Activated B cell treated with CpG ODN at 0.5 μM for 24 hours (primary cell): ENCODE measurements at regions of chr11 and their contacts with region 1.

Region 1: GRCh38 chr11:67265633-67266423 is 445 bp upstream of the GRK2 start:
- DNase-seq: peak; percentile 90
- ATAC-seq: peak; percentile 62
- H3K4me3 Mint-ChIP-seq: peak overlapping the region; percentile 77
- H3K27ac Mint-ChIP-seq: peak overlapping the region; percentile 84
- H3K4me1 Mint-ChIP-seq: peaks cover 67% of the 10 kb centered on the region
- H3K27me3 Mint-ChIP-seq: peaks cover 2% of the 10 kb centered on the region
- CTCF ChIP-seq: no peak

Region 2: DNA sequence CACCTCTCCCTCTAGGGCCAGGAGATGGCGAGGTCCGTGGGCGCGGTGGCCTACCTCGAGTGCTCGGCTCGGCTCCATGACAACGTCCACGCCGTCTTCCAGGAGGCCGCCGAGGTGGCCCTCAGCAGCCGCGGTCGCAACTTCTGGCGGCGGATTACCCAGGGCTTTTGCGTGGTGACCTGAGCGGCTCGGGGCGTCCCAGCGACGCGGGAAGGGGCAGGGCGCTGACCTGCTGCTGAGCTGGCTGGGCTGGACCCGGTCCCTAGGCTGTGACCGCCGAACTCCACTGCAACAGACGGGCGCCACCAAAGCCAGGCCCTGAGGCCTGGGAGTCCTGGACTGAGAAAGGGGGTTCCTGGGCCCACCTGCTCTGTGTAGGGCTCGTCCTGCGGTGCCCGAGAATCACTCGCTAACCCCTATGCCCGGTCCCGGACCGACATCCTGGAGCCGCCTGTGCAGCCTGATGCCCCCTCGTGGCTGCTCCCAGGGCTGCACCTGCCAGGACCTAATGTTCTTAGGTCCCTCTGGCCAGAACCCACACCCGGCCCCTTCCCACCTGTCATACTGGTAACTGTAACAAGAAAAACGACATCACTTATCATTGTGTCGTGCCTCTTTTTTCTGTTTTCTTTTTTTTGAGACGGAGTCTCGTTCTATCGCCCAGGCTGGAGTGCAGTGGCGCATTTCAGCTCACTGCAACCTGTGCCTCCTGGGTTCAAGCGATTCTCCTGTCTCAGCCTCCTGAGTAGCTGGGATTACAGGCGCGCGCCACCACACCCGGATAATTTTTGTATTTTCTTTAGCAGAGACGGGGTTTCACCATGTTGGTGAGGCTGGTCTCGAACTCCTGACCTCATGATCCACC is 194.2 kb before region 1 on chr11:
- CTCF ChIA-PET with region 1: no interaction called
- POLR2A ChIA-PET with region 1: no interaction called
- intact Hi-C with region 1: no loop called
- DNase-seq: peak; percentile 55
- ATAC-seq: peak; percentile 91
- H3K4me3 Mint-ChIP-seq: peak overlapping the region; percentile 32
- H3K27ac Mint-ChIP-seq: no peak overlapping the region
- H3K4me1 Mint-ChIP-seq: peaks cover 3% of the 10 kb centered on the region
- H3K27me3 Mint-ChIP-seq: peaks cover 13% of the 10 kb centered on the region
- CTCF ChIP-seq: no peak

Region 3: DNA sequence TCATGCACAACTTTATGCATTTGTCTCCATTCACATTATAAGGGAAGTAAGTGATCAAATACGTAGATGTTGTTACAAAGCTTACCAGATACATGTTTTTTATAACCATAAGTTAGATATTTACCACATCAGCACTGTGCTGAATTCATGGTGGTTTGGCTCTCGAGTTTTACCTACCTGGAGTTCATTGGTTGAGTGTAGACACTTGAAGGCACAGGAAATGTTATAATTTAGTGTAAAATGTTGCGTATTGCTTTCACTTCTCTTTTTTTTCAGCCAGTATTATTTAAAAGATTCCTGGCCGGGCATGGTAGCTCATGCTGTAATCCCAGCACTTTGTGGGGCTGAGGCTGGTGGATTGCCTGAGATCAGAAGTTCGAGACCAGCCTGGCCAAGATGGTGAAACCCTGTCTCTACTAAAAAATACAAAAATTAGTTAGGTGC is 52.6 kb before region 1 on chr11:
- CTCF ChIA-PET with region 1: no interaction called
- POLR2A ChIA-PET with region 1: no interaction called
- intact Hi-C with region 1: no loop called
- DNase-seq: no peak
- ATAC-seq: peak; percentile 95
- H3K4me3 Mint-ChIP-seq: peak overlapping the region; percentile 36
- H3K27ac Mint-ChIP-seq: peak overlapping the region; percentile 55
- H3K4me1 Mint-ChIP-seq: peaks cover 20% of the 10 kb centered on the region
- H3K27me3 Mint-ChIP-seq: no peaks in the 10 kb centered on the region
- CTCF ChIP-seq: no peak

Region 4: DNA sequence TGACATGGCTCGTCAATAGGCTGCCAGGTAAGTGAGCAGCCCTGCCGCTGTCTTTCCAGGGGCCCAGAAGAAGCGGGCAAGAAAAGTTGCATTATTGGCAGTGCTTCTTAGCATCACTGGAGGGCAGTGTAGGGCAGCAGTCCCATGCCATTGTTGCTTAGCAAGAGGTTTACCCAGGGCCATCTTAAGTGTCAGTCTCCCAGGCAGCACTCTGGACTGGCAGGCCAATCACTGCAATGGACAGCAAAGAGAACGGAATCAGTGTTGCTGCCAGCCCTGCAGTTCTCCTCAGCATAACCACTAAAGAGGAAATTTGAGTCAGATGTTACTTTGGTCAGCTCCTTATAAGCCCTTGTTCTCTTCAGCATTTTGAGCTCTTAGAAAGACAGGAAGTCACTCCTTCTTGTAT is 13.0 kb before region 1 on chr11:
- CTCF ChIA-PET with region 1: interaction called, 21 read pairs
- POLR2A ChIA-PET with region 1: interaction called, 3 read pairs
- intact Hi-C with region 1: no loop called
- DNase-seq: no peak
- ATAC-seq: peak; percentile 75
- H3K4me3 Mint-ChIP-seq: no peak overlapping the region
- H3K27ac Mint-ChIP-seq: no peak overlapping the region
- H3K4me1 Mint-ChIP-seq: peaks cover 8% of the 10 kb centered on the region
- H3K27me3 Mint-ChIP-seq: no peaks in the 10 kb centered on the region
- CTCF ChIP-seq: no peak

Region 5: GRCh38 chr11:67288452-67289225 is 22.8 kb after region 1 on chr11:
- CTCF ChIA-PET with region 1: interaction called, 20 read pairs
- POLR2A ChIA-PET with region 1: interaction called, 280 read pairs
- intact Hi-C with region 1: loop called (anchors 1 kb)
- DNase-seq: peak; percentile 96
- ATAC-seq: peak; percentile 76
- H3K4me3 Mint-ChIP-seq: peak overlapping the region; percentile 80
- H3K27ac Mint-ChIP-seq: peak overlapping the region; percentile 98
- H3K4me1 Mint-ChIP-seq: peaks cover 46% of the 10 kb centered on the region
- H3K27me3 Mint-ChIP-seq: no peaks in the 10 kb centered on the region
- CTCF ChIP-seq: no peak

Region 6: DNA sequence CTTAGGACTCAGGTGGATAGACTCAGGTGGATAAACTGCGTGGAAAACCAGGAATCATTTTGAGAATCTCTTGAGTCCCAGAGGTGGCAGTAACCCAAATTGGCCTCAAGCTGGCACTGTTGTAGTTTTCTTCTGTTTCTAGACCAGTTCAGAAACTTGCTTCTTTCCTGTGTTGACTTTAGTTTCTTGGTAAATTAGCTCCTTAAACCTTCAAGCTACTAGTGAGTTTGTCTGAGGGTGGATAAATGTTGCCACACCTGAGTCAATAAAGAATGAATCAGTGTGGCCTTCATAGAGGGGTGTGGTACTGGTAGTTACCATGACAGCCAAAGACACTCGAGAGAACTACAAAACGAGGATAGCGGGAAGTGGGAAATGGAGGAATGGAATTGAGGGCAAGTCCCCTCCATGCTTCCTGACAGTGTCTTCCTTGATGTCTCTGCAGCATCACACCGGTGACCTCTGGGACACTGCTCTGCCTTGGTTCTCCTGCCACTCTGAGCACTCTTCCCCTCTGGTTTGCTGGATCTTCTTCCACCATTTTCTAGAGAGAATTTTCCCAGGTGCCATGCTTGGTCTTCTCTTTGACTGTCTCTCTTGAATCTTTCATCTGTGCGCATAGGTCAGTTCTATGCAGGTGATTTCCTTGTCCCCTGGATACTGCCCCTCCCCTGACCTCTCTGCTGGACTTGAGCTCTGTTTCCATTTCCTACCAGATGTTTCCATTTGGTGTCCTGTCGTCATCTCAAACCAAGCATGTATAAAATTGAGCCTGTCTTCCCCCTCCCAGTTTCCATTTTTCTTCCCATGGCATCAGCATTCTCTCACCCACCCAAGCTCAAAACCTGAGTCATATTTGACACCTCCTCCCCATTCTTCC is 80.3 kb after region 1 on chr11:
- CTCF ChIA-PET with region 1: interaction called, 19 read pairs
- POLR2A ChIA-PET with region 1: interaction called, 63 read pairs
- intact Hi-C with region 1: no loop called
- DNase-seq: no peak
- ATAC-seq: peak; percentile 46
- H3K4me3 Mint-ChIP-seq: no peak overlapping the region
- H3K27ac Mint-ChIP-seq: peak overlapping the region; percentile 88
- H3K4me1 Mint-ChIP-seq: peaks cover 71% of the 10 kb centered on the region
- H3K27me3 Mint-ChIP-seq: no peaks in the 10 kb centered on the region
- CTCF ChIP-seq: no peak